HepG2 (cell line): ENCODE measurements at regions of chr14 and their contacts with region 1.

Region 1: GRCh38 chr14:48261436-48261835 is 586.0 kb upstream of the MDGA2 start:
- DNase-seq: no peak
- ATAC-seq: no peak
- H3K4me3 ChIP-seq: no peak overlapping the region
- H3K27ac ChIP-seq: no peak overlapping the region
- H3K4me1 ChIP-seq: no peaks in the 10 kb centered on the region
- H3K27me3 ChIP-seq: no peaks in the 10 kb centered on the region
- CTCF ChIP-seq: no peak
- EP300 ChIP-seq: no peak
- POLR2A ChIP-seq: no peak
- RAD21 ChIP-seq: no peak

Region 2: DNA sequence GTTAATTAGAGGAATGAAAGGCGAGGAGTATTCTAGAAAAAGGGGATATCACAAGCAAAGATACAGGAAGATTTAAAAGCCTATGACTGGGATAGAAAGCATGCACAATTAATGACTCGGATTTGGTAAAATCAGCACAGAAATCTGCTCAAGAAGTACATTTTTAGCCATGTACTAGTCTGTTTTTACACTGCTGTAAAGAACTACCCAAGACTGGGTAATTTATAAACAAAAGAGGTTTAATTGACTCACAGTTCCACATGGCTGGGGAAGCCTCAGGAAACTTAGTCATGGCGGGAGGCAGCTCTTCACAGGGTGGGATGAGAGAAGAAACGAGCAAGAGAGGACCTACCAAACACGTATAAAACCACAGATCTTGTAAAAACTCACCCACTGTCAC is 130.2 kb after region 1 on chr14:
- CTCF ChIA-PET with region 1: no interaction called
- POLR2A ChIA-PET with region 1: no interaction called
- in situ Hi-C with region 1: no loop called
- intact Hi-C with region 1: no loop called
- DNase-seq: no peak
- ATAC-seq: no peak
- H3K4me3 ChIP-seq: no peak overlapping the region
- H3K27ac ChIP-seq: no peak overlapping the region
- H3K4me1 ChIP-seq: no peaks in the 10 kb centered on the region
- H3K27me3 ChIP-seq: no peaks in the 10 kb centered on the region
- CTCF ChIP-seq: no peak
- EP300 ChIP-seq: no peak
- POLR2A ChIP-seq: no peak
- RAD21 ChIP-seq: no peak

Region 3: GRCh38 chr14:48920618-48921017 is 659.2 kb after region 1 on chr14:
- CTCF ChIA-PET with region 1: no interaction called
- POLR2A ChIA-PET with region 1: no interaction called
- in situ Hi-C with region 1: no loop called
- intact Hi-C with region 1: loop called (anchors 5 kb)
- DNase-seq: no peak
- ATAC-seq: no peak
- H3K4me3 ChIP-seq: no peak overlapping the region
- H3K27ac ChIP-seq: no peak overlapping the region
- H3K4me1 ChIP-seq: no peaks in the 10 kb centered on the region
- H3K27me3 ChIP-seq: no peaks in the 10 kb centered on the region
- CTCF ChIP-seq: no peak
- EP300 ChIP-seq: no peak
- POLR2A ChIP-seq: no peak
- RAD21 ChIP-seq: no peak